ENCODE measurements at regions of chr12 and their contacts with region 1.

Region 1: DNA sequence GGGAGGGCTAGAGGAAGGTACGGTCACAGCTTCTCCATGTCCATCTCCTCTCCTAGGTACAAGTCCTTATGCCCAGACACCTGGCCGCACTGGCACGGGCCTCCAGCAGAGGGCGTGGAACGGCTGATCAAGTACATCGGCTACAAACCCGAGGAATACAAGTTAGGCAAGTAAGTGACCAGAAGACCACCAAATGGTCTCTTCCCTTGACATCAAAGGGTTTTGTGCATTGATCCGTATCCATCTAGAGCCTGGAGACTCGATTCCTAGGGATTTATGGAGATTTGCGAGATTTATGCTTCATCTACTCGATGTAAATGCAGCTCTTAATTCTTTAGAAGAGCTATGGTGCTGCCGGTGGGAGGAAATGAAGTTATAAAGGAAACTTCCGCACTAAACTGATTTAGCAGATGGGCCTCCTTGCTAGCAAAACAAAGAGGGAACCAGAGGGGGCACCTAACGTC is 44.2 kb downstream of the KCTD10 start:
- DNase-seq: peak; percentile 93

Region 2: DNA sequence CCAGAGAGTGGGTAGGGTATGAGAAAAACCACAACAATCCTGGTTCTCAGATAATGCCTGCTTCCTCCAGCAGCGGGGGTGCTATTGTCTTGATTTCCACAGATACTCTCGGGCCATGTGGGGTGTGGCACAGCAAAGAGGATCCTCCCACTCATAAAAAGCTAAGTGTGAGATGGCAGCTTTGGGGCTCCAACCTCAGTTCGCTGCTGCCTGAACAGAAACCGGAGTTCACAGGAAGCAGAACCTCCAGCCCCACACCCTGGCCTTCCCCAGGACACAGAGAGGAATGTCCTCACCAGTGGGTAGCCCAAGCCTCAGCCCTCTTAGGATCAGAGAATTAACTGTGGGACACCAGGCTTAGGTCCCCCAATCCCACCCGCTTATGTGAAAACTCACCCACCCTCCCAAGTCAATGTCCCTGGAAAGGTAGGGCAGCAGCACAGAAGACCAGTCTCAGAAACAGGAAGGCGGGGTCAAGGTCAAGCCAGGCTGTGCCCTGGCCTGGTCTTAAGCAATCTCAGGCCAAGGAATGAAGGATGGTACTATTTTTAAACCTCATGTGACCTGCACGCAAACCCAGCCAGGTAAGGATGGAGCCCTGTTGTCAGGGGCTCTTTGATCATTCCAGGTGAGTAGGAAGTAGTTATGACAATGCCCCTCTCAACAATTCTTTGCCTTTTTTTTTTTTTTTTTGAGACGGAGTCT is 35.3 kb after region 1 on chr12:
- intact Hi-C with region 1: loop called (anchors 5 kb)
- DNase-seq: peak; percentile 60